ENCODE measurements at regions of chr10 and their contacts with region 1.

Region 1: DNA sequence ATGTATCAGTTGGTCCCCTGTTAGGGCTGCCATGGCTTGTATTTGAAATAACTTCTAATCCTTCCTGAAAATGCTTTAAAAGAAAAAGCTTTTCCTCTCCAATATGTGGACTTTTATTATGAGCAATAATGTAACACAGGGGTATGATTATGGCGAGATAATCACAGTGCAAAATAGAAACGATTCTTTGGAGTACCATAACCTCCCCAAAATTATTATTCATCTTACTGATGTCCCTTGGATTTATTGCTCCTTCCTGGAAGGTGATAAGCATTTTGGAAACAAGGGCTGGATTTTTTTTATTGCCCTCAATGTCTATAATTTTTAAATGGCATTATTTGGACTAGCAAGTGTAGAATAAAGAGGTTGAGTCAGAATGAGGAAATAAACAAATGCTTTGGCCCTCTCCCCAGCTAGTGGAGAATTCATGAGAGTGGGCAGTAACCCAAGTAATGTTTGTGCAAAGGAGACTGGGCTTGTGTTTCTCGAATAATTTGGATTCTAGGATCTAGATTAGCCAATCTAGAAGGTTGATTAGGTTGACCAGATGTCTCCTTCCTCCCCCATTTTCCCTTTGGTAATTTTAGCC is 403.9 kb upstream of the CELF2 start:
- DNase-seq: no peak
- H3K4me3 ChIP-seq: no peak overlapping the region
- H3K27ac ChIP-seq: peak overlapping the region in 1 of 2 donors; percentile 25
- H3K4me1 ChIP-seq: peaks cover 0 to 5% of the 10 kb centered on the region in 2 donors
- H3K27me3 ChIP-seq: no peaks in the 10 kb centered on the region
- CTCF ChIP-seq: no peak

Region 2: GRCh38 chr10:10658172-10658785 is 44.5 kb after region 1 on chr10:
- intact Hi-C with region 1: loop called (anchors 5 kb)
- DNase-seq: no peak
- H3K4me3 ChIP-seq: no peak overlapping the region
- H3K27ac ChIP-seq: peak overlapping the region; percentile 11 to 13
- H3K4me1 ChIP-seq: peaks cover 0 to 2% of the 10 kb centered on the region in 2 donors
- H3K27me3 ChIP-seq: no peaks in the 10 kb centered on the region
- CTCF ChIP-seq: no peak

Region 3: GRCh38 chr10:10985361-10985760 is 371.6 kb after region 1 on chr10:
- intact Hi-C with region 1: no loop called
- DNase-seq: no peak
- H3K4me3 ChIP-seq: peak overlapping the region in 1 of 2 donors; percentile 2
- H3K27ac ChIP-seq: no peak overlapping the region
- H3K4me1 ChIP-seq: no peaks in the 10 kb centered on the region
- H3K27me3 ChIP-seq: no peaks in the 10 kb centered on the region
- CTCF ChIP-seq: no peak

Region 4: DNA sequence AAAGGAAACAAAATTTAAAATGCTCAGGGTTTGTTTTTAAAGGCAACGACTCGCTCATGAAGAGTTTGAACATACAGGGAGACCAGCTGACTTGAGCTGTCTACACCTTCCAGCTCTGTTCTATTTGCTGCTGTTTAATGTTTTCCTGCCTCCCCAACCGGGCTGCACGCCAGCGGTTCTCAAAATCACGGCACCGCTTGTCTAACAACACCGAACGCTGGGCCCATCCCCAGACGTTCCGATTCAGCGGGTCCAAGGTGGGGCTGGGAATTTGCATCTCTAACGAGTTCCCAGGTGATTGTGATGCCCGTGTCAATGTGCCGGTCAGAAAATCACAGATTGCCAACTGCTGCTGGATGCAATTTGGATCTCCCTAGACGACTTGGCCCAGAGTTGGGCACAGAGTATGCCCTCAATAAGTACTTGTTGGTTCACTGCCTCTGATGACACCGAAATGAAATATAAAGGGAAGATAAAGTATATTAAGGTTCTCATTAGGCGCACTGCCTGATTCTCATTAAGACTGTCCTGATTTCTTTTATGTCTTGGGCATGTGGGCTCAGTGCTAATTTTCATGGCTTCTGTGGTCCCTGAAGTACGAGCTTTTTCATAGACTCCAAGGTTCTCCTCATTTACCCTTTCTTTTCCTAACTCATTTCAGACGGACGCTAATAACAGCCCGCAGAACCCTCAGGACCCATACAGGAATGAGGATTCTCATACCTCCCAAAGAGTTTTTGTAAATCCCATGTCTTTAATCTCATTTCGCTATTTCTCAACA is 432.4 kb after region 1 on chr10:
- intact Hi-C with region 1: no loop called
- DNase-seq: no peak
- H3K4me3 ChIP-seq: peak overlapping the region in 1 of 2 donors; percentile 34
- H3K27ac ChIP-seq: peak overlapping the region; percentile 9 to 22
- H3K4me1 ChIP-seq: peaks cover 3 to 29% of the 10 kb centered on the region in 2 donors
- H3K27me3 ChIP-seq: no peaks in the 10 kb centered on the region
- CTCF ChIP-seq: no peak